Activated naive CD8-positive, alpha-beta T cell treated with anti-CD3 and anti-CD28 coated beads, Interleukin-2, amount 10 ng/mL, durations not matched to agents 7 days and 5 days (primary cell): ENCODE measurements at regions of chr16 and their contacts with region 1.

Region 1: GRCh38 chr16:30534368-30535105 is at the start of gene ZNF747:
- DNase-seq: peak; percentile 91
- ATAC-seq: peak; percentile 83
- H3K4me3 Mint-ChIP-seq: peak within 1 kb of the TSS; percentile 96
- H3K27ac Mint-ChIP-seq: peak within 1 kb of the TSS; percentile 99
- H3K4me1 Mint-ChIP-seq: peaks cover 23% of the 10 kb centered on the region
- H3K27me3 Mint-ChIP-seq: no peaks in the 10 kb centered on the region
- total RNA-seq, gene ZNF747: 11.9 to 12.5 TPM

Region 2: DNA sequence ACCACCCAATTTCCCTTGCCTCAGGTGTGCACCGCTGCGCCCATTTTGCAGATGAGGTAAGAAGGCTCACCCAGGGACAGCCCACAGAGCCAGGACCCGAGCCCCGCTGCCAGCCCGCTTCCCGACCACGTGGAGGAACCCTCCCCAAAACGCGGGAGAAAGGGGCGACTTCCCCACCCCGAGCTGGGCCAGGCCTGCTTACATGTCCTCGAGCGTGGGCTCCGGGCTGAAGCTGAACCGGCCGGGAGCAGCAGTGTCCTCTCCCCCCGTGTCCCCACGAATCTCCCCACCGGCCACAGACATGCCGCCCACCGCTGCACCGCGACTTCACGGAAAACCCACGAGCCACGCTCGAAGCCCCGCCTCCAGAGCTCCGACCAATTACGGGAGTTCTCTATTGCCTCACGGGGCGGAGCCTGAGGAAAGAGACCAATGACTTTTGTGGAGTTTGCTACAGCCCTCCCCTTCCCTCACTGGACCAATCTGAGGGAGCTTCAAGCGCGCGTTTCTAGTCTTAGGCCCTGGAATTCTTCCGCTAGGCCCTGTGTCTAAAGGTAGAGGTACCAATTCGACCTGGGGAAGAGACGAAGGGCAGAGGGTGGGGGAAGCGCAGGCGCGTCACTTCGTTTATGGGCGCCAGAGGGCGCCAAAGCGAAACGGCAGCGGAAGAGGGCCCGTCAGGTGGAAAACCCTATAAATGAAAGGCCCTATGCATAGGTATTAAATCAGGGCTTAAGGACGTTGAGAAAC is 104.7 kb before region 1 on chr16 and contains the start of gene DCTPP1:
- POLR2A ChIA-PET with region 1: interaction called, 13 read pairs
- DNase-seq: peak; percentile 91
- ATAC-seq: peak; percentile 99
- H3K4me3 Mint-ChIP-seq: no peak within 1 kb of the TSS
- H3K27ac Mint-ChIP-seq: no peak within 1 kb of the TSS
- H3K4me1 Mint-ChIP-seq: peaks cover 26% of the 10 kb centered on the region
- H3K27me3 Mint-ChIP-seq: no peaks in the 10 kb centered on the region
- total RNA-seq, gene DCTPP1: 52.2 to 52.8 TPM

Region 3: GRCh38 chr16:30551781-30552180 is 17.2 kb after region 1 on chr16:
- POLR2A ChIA-PET with region 1: interaction called, 131 read pairs
- DNase-seq: peak; percentile 63
- ATAC-seq: peak; percentile 93
- H3K4me3 Mint-ChIP-seq: peak overlapping the region; percentile 73
- H3K27ac Mint-ChIP-seq: peak overlapping the region; percentile 93
- H3K4me1 Mint-ChIP-seq: peaks cover 45% of the 10 kb centered on the region
- H3K27me3 Mint-ChIP-seq: no peaks in the 10 kb centered on the region

Region 4: GRCh38 chr16:30571695-30572600 is 37.4 kb after region 1 on chr16 and contains the start of gene ZNF688:
- POLR2A ChIA-PET with region 1: interaction called, 60 read pairs
- DNase-seq: peak; percentile 90
- ATAC-seq: peak; percentile 86
- H3K4me3 Mint-ChIP-seq: peak within 1 kb of the TSS; percentile 97
- H3K27ac Mint-ChIP-seq: peak within 1 kb of the TSS; percentile 90
- H3K4me1 Mint-ChIP-seq: peaks cover 36% of the 10 kb centered on the region
- H3K27me3 Mint-ChIP-seq: no peaks in the 10 kb centered on the region
- total RNA-seq, gene ZNF688: 17.8 to 18.3 TPM

Region 5: DNA sequence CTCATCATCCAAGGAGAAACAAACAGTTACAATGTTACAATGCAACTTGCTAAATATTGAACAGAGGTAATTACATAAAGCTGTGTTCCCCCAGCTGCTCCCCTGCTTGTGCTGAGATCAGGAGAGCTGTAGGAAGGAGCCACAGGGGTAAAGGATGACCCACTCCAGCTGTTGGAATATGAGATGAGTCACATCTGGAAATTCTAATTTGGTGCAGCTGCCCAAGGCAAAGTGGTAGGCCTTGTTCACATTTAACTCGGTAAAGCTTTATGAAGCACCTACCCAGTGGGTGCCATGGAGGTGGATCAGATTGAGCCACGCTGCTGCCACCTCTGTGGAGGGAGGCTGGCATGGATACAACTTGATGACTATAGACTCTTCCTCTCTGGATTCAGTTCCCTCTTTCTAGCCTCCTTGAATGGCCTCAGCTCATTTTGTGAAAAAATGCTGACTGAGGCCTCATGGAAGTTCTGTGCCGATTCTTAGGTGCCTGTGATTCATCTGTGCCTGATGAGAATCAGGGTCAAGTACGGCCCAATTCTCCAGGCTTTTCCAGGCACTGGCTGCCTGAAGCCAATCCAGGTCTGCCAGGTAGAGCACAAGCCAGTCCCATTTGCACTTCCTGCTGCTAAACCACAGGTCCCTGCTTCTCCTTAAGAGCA is 68.2 kb after region 1 on chr16:
- POLR2A ChIA-PET with region 1: interaction called, 16 read pairs
- DNase-seq: no peak
- ATAC-seq: no peak
- H3K4me3 Mint-ChIP-seq: no peak overlapping the region
- H3K27ac Mint-ChIP-seq: no peak overlapping the region
- H3K4me1 Mint-ChIP-seq: peaks cover 11% of the 10 kb centered on the region
- H3K27me3 Mint-ChIP-seq: no peaks in the 10 kb centered on the region

Region 6: GRCh38 chr16:30657866-30658730 is 123.6 kb after region 1 on chr16 and contains the start of gene FBRS:
- POLR2A ChIA-PET with region 1: interaction called, 11 read pairs
- DNase-seq: peak; percentile 99
- ATAC-seq: peak; percentile 69
- H3K4me3 Mint-ChIP-seq: peak within 1 kb of the TSS; percentile 93
- H3K27ac Mint-ChIP-seq: peak within 1 kb of the TSS; percentile 100
- H3K4me1 Mint-ChIP-seq: peaks cover 30% of the 10 kb centered on the region
- H3K27me3 Mint-ChIP-seq: no peaks in the 10 kb centered on the region
- total RNA-seq, gene FBRS: 140 to 143 TPM